Breast epithelium (tissue), 4 donors: ENCODE measurements at regions of chr7 and their contacts with region 1.

Region 1: DNA sequence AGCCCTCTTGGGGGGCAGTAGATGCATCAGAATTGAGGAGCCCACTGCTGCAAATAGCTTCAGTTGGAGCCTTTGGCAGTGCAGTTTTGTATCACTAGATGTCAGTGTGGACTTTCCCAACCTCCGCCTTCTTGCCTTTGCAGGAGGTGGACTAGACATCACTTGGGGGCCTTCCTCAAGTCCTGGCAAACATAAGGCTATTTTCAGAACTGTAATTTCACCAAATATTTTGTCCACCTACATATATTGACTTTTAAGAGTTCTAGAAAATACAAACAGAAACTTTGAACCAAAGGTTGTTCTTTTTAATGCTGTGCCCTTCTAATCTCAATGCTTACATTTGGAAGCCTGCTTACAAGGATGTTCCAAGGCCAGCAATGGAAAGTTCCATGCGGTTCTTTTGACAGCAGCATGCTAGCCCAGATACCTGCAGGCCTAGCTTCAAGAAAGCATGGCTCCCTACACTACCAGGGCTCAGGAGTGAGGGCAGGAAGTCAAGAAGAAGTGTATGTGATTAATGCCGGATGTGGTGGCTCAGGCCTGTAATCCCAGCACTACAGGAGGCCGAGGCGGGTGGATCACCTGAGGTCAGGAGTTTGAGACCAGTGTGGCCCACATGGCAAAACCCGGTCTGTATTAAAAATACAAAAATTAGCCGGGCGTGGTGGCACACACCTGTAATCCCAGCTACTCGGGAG is 8.0 kb upstream of the ZNRF2 start:
- DNase-seq: no peak
- H3K4me3 ChIP-seq: no peak overlapping the region
- H3K27ac ChIP-seq: no peak overlapping the region
- H3K4me1 ChIP-seq: no peaks in the 10 kb centered on the region
- H3K27me3 ChIP-seq: no peaks in the 10 kb centered on the region
- CTCF ChIP-seq: peak in 2 of 3 donors; percentile 43 to 46
- POLR2A ChIP-seq: no peak

Region 2: DNA sequence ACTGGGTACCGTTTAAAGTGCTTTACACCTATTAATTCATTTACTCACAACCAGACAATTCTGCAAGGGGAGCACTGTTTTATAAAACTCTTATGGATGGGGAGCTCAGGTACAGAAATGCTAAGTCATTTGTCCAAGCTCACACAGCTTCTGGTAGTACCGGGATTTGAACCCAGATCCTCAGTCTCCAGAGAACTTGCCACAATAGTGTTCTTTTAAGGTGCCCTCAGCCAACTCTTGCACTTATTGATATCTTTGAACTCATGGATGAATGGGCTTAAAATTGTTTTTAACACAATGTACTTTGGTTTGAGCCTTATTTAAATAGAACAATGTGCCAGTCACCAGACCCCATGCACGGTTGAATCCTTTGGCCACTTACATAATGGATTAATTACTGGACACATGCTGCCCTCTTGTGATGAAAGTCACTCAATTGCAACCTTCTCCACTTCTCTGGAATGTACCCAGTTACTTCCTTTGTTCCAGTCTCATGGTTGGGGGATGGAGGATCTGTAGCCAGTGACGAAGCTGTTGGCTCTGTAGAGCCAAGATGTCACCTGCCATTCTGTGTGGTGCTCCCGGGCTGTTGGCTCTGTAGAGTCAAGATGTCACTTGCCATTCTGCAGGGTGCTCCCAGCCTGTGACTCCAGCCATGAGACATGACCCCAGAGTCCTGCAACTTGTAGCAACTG is 136.6 kb after region 1 on chr7:
- intact Hi-C with region 1: loop called (anchors 10 kb)
- DNase-seq: peak in 1 of 2 donors; percentile 39
- H3K4me3 ChIP-seq: no peak overlapping the region
- H3K27ac ChIP-seq: peak overlapping the region in 1 of 2 donors; percentile 10
- H3K4me1 ChIP-seq: no peaks in the 10 kb centered on the region
- H3K27me3 ChIP-seq: no peaks in the 10 kb centered on the region
- CTCF ChIP-seq: peak in 2 of 3 donors; percentile 63 to 75
- POLR2A ChIP-seq: no peak